PC-9 (cell line): ENCODE measurements at regions of chr12 and their contacts with region 1.

Region 1: DNA sequence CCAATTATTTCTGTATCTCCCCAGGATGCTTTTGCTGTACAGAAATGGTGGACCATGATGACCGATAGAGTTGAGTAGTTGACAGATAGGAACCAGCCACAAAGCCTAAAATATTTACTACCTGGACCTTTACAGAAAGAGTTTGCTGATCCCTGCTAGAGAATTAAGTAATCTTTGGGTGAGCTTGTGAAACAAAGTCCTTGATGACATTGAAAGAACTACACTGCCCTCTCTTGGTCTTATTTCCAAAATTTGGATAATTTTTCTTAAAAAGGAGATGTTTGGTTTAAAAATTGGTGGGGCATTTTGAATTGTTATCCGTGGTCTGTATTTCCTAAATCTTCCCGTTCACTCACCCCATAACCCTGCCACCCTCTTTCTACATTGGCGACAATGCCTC is 13.7 kb upstream of the TCTN1 start:
- DNase-seq: peak in 1 of 2 experiments; percentile 58
- H3K4me3 ChIP-seq: no peak overlapping the region
- H3K27ac ChIP-seq: no peak overlapping the region
- H3K4me1 ChIP-seq: no peaks in the 10 kb centered on the region
- H3K27me3 ChIP-seq: no peaks in the 10 kb centered on the region
- CTCF ChIP-seq: peak; percentile 85

Region 2: GRCh38 chr12:110280779-110281548 is 319.3 kb before region 1 on chr12 and contains the start of gene ATP2A2:
- CTCF ChIA-PET with region 1: interaction called, 16 read pairs
- POLR2A ChIA-PET with region 1: no interaction called
- intact Hi-C with region 1: no loop called
- DNase-seq: peak; percentile 64 to 90
- H3K4me3 ChIP-seq: peak within 1 kb of the TSS; percentile 96
- H3K27ac ChIP-seq: peak within 1 kb of the TSS; percentile 85
- H3K4me1 ChIP-seq: peaks cover 33% of the 10 kb centered on the region
- H3K27me3 ChIP-seq: no peaks in the 10 kb centered on the region
- CTCF ChIP-seq: no peak
- total RNA-seq, gene ATP2A2: 127 and 154 TPM in 2 replicates

Region 3: GRCh38 chr12:110468212-110469048 is 131.8 kb before region 1 on chr12 and contains the starts of genes FAM216A and GPN3:
- CTCF ChIA-PET with region 1: interaction called, 16 read pairs
- POLR2A ChIA-PET with region 1: no interaction called
- intact Hi-C with region 1: loop called (anchors 1 kb)
- DNase-seq: peak; percentile 95 to 97
- H3K4me3 ChIP-seq: peak within 1 kb of the TSS; percentile 81
- H3K27ac ChIP-seq: peak within 1 kb of the TSS; percentile 70
- H3K4me1 ChIP-seq: peaks cover 18% of the 10 kb centered on the region
- H3K27me3 ChIP-seq: no peaks in the 10 kb centered on the region
- CTCF ChIP-seq: no peak
- total RNA-seq, gene FAM216A: 7.7 and 8.0 TPM in 2 replicates
- total RNA-seq, gene GPN3: 28.5 and 35.1 TPM in 2 replicates

Region 4: DNA sequence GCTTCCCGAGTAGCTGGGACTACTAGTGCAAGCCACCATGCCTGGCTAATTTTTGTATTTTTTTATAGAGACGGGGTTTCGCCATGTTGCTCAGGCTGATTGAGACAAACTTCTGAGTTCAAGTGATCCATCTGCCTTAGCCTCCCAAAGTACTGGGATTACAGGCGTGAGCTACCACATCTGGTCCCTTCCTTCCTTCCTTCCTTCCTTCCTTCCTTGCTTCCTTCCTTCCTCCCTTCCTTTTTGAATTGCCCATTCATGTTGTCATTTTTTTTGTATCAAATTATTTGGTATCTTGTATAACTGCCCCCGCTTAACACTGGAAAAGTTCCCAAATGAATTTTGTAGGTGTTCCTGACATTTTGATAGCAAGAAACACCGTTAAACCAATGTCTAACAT is 86.4 kb before region 1 on chr12:
- CTCF ChIA-PET with region 1: interaction called, 18 read pairs
- POLR2A ChIA-PET with region 1: no interaction called
- intact Hi-C with region 1: loop called (anchors 1 kb)
- DNase-seq: no peak
- H3K4me3 ChIP-seq: no peak overlapping the region
- H3K27ac ChIP-seq: no peak overlapping the region
- H3K4me1 ChIP-seq: no peaks in the 10 kb centered on the region
- H3K27me3 ChIP-seq: no peaks in the 10 kb centered on the region
- CTCF ChIP-seq: no peak

Region 5: GRCh38 chr12:110780448-110780847 is 180.2 kb after region 1 on chr12:
- CTCF ChIA-PET with region 1: no interaction called
- POLR2A ChIA-PET with region 1: no interaction called
- intact Hi-C with region 1: no loop called
- DNase-seq: no peak
- H3K4me3 ChIP-seq: no peak overlapping the region
- H3K27ac ChIP-seq: no peak overlapping the region
- H3K4me1 ChIP-seq: no peaks in the 10 kb centered on the region
- H3K27me3 ChIP-seq: no peaks in the 10 kb centered on the region
- CTCF ChIP-seq: no peak

Region 6: DNA sequence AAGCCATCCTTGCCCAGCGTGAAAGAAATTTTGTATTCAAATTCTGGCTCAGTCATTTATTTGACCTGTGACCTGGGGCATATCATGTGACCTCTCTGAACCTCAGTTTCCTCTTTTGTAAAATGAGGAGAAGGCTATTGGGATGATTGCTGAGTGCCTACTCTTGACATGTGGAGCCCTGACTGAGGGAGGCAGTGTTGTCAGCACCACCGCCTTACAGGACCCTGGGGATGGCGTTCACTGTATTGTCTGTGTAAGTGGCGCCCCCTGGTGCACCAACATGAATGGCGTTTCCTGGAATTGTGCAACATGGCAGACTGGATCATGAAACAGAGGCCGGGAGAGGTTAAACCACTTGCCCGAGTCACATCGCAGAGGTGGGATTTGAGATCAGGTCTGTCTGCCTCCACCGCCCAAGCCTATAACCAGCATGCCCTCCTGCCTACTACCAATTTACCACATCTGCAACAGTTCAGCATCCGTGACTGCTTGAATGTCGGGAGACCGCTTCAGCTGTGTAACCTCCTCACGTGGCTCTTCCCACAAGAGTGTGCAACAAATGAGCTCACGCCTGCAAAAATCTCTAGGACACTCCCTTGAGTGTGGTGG is 226.4 kb after region 1 on chr12:
- CTCF ChIA-PET with region 1: interaction called, 9 read pairs
- POLR2A ChIA-PET with region 1: no interaction called
- intact Hi-C with region 1: loop called (anchors 1 kb)
- DNase-seq: peak; percentile 63 to 87
- H3K4me3 ChIP-seq: no peak overlapping the region
- H3K27ac ChIP-seq: no peak overlapping the region
- H3K4me1 ChIP-seq: no peaks in the 10 kb centered on the region
- H3K27me3 ChIP-seq: no peaks in the 10 kb centered on the region; the same call in 1 of the 2 replicates
- CTCF ChIP-seq: peak; percentile 93

Region 7: DNA sequence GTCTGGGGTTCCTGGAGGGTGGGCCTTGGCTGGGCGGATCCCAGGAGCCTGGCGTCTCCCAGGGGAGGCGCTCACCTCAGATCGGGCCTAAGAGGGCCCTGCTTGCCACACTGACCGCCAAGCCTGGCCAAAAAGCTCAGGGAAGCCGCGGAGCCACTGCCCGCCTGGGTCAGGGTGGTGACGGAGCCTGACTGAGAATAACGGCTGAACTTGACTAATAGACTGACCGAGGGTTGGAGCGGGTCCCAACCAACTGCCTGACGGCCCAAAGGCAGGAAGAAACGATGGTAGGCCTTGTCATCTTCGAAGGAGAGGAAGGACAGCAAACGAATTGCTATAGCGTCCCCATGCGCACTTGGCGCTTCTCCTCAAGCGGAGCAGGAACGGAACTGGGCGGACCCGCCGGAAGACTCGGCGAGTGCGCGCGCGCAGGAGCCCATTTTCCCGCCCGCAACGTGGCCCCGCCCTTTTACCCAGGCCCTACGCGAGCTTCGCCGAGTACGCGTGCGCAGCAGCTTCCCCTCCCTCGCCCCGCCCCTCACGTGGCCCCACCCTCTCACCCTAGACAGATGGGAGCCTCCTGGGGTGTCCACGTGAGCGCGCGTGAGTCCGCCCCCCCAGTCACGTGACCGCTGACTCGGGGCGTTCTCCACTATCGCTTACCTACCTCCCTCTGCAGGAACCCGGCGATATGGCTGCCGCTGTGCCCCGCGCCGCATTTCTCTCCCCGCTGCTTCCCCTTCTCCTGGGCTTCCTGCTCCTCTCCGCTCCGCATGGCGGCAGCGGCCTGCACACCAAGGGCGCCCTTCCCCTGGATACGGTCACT is 1412.7 kb after region 1 on chr12 and contains the starts of genes ERP29 and TMEM116:
- CTCF ChIA-PET with region 1: no interaction called
- POLR2A ChIA-PET with region 1: interaction called, 13 read pairs
- intact Hi-C with region 1: no loop called
- DNase-seq: peak; percentile 91 to 98
- H3K4me3 ChIP-seq: peak within 1 kb of the TSS; percentile 86
- H3K27ac ChIP-seq: peak within 1 kb of the TSS; percentile 88
- H3K4me1 ChIP-seq: peaks cover 36% of the 10 kb centered on the region
- H3K27me3 ChIP-seq: no peaks in the 10 kb centered on the region
- CTCF ChIP-seq: peak; percentile 68
- total RNA-seq, gene ERP29: 131 and 154 TPM in 2 replicates
- total RNA-seq, gene TMEM116: 21.9 and 23.4 TPM in 2 replicates